ENCODE measurements at regions of chr15 and their contacts with region 1.

Region 1: DNA sequence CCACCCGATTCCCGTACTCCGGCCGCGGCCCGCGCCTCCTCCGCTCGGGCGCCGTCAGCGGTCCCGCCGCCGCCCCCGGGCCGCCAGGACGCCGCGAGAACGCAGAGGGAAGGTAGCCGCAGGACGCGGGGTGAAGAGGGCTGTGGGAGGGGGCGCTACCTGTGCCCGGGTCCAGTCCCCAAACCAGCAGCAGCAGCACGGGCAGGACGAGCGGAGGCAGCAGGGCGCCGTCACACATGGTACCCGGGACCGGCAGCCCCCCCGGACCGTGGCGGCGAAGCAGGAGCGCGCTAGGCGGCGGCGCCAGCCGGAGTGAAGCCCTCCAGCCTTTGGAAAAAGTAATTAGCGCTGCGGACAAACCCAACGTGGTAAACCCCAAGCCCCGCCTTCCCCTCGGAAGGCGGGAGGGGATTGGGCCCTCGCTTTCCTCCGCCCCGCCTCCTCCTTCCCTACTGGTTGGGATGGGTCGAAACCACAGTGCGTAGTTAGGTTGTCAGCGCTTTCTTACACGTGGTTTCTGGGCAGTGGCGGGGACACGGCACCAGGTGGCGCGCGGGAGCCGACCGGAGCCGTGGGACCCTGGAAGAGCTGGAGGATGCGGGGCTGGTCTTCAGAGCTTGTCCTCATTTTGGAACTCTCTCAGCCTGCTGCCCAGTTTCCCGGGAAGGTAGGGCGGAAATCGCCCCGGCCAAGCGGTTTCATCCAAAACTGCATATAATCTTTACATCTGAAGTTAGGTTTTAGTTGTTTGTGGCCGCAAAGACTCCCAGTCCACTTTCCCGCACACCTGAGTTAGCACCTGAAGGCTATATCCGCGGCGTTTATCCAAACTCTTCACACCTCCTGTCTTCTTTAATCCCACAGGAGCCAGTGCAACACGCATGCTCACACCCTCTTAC is at the start of gene ADAMTS17:
- DNase-seq: peak; percentile 94
- ATAC-seq: peak; percentile 95
- H3K4me3 ChIP-seq: peak within 1 kb of the TSS; percentile 61 to 68
- H3K27ac ChIP-seq: peak within 1 kb of the TSS; percentile 30; the same call in 1 of the 2 replicates
- H3K4me1 ChIP-seq: peaks cover 3 to 13% of the 10 kb centered on the region in 2 experiments; a peak in 2 of 4 replicates
- H3K27me3 ChIP-seq: no peaks in the 10 kb centered on the region
- CTCF ChIP-seq: peak; percentile 78 to 86 (median 86)
- POLR2A ChIP-seq: peak; percentile 41
- RAD21 ChIP-seq: peak; percentile 70
- total RNA-seq, gene ADAMTS17: 4.2 TPM

Region 2: DNA sequence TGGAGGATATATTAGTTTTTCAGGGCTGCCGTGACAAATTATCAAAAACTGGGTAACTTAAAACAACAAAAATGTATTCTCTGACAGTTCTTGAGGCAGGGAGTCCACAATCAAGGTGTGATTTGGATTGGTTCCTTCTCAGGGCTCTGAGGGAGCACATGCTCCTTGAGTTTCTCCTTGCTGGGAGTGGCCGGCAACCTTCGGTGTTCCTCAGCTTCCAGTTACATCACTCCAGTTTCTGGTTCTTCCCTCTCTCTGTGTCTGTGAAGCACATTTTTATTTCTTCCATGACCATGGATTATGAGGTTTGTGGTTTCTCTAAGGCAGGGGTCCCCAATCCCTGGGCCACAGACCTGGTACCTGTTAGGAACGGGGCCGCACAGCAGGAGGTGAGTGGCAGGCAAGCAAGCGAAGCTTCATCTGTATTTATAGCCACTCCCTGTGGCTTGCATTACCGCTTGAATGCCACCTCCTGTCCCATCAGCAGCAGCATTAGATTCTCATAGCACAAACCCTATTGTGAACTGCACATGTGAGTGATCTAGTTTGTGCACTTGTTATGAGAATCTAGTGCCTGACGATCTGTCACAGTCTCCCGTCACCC is 1066.3 kb before region 1 on chr15:
- CTCF ChIA-PET with region 1: interaction called, 6 read pairs
- POLR2A ChIA-PET with region 1: no interaction called
- RAD21 ChIA-PET with region 1: no interaction called
- intact Hi-C with region 1: loop called (anchors 5 kb)
- DNase-seq: no peak
- ATAC-seq: no peak
- H3K4me3 ChIP-seq: no peak overlapping the region
- H3K27ac ChIP-seq: no peak overlapping the region
- H3K4me1 ChIP-seq: no peaks in the 10 kb centered on the region
- H3K27me3 ChIP-seq: no peaks in the 10 kb centered on the region
- CTCF ChIP-seq: no peak
- POLR2A ChIP-seq: no peak
- RAD21 ChIP-seq: no peak

Region 3: GRCh38 chr15:99928429-99928981 is 413.4 kb before region 1 on chr15:
- CTCF ChIA-PET with region 1: interaction called, 17 read pairs
- POLR2A ChIA-PET with region 1: no interaction called
- RAD21 ChIA-PET with region 1: interaction called in 1 of 2 experiments, 3 read pairs
- intact Hi-C with region 1: loop called (anchors 2 kb)
- DNase-seq: peak; percentile 42
- ATAC-seq: peak; percentile 91
- H3K4me3 ChIP-seq: peak overlapping the region; percentile 44 to 60
- H3K27ac ChIP-seq: peak overlapping the region; percentile 56
- H3K4me1 ChIP-seq: peaks cover 7 to 14% of the 10 kb centered on the region in 2 experiments; a peak in 3 of 4 replicates
- H3K27me3 ChIP-seq: no peaks in the 10 kb centered on the region
- CTCF ChIP-seq: peak; percentile 34 to 49 (median 47); a peak in 5 of 6 replicates
- POLR2A ChIP-seq: no peak
- RAD21 ChIP-seq: peak; percentile 81

Region 4: GRCh38 chr15:100043015-100043641 is 298.8 kb before region 1 on chr15:
- CTCF ChIA-PET with region 1: no interaction called
- POLR2A ChIA-PET with region 1: no interaction called
- RAD21 ChIA-PET with region 1: no interaction called
- intact Hi-C with region 1: loop called (anchors 5 kb)
- DNase-seq: peak; percentile 33
- ATAC-seq: peak; percentile 79
- H3K4me3 ChIP-seq: peak overlapping the region; percentile 15 to 46; a peak in 3 of 4 replicates
- H3K27ac ChIP-seq: peak overlapping the region; percentile 63
- H3K4me1 ChIP-seq: peaks cover 25 to 27% of the 10 kb centered on the region in 2 experiments
- H3K27me3 ChIP-seq: no peaks in the 10 kb centered on the region
- CTCF ChIP-seq: no peak
- POLR2A ChIP-seq: no peak
- RAD21 ChIP-seq: no peak

Region 5: DNA sequence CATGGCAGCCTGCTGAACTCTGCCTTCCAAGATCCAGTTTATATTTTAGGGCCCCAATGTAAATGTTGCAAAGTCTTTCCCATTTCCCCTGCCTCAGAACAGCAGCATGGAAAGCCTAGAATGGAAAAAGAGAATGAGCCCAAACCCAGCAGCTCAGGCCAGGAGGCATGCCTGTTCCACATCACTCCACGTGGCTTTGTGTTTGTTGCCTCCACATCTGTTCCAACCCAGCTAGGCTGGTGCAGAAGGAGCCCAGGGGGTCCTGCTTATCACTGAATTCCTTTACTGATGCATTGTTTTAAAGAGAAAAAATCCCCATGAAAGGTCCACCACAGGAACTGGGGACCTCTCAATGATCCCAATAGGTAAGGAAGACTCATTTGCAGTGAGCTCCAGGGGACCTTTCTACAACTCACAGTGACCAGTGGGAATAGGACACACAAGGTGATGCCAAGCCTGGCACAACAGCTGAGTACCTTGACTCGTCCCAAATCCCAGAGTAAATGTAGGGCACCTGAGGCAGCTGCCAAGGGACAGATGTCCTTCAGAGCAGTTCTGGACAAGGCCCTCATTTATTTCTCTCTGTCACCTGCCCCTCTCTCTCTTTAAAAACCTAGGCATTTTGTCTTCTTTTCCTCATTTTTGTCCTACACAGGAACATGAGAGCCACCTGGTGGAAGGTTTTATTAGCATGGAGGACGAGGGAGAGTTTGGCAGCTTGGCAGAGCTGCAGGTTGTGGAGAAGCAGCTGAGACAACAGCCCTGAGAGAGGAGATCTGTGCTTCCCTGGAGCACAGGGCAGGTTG is 41.6 kb after region 1 on chr15:
- CTCF ChIA-PET with region 1: interaction called, 13 read pairs
- POLR2A ChIA-PET with region 1: no interaction called
- RAD21 ChIA-PET with region 1: interaction called in 1 of 2 experiments, 7 read pairs
- intact Hi-C with region 1: loop called (anchors 5 kb)
- DNase-seq: peak; percentile 8
- ATAC-seq: peak; percentile 78
- H3K4me3 ChIP-seq: no peak overlapping the region
- H3K27ac ChIP-seq: no peak overlapping the region
- H3K4me1 ChIP-seq: no peaks in the 10 kb centered on the region
- H3K27me3 ChIP-seq: no peaks in the 10 kb centered on the region
- CTCF ChIP-seq: peak; percentile 49 to 62 (median 54)
- POLR2A ChIP-seq: no peak
- RAD21 ChIP-seq: peak; percentile 67

Measured in HCT116 (cell line).